GM12878 (cell line): ENCODE measurements at regions of chr4 and their contacts with region 1.

Region 1: GRCh38 chr4:83284193-83285054 is at the start of gene COQ2:
- DNase-seq: no peak
- ATAC-seq: peak; percentile 80
- H3K4me3 ChIP-seq: peak within 1 kb of the TSS; percentile 69
- H3K27ac ChIP-seq: peak within 1 kb of the TSS; percentile 63
- H3K4me1 ChIP-seq: peaks cover 6% of the 10 kb centered on the region
- H3K27me3 ChIP-seq: no peaks in the 10 kb centered on the region
- CTCF ChIP-seq: peak in 2 of 3 experiments; percentile 10 to 16; a peak in 1 of 6 replicates
- EP300 ChIP-seq: no peak
- POLR2A ChIP-seq: peak; percentile 84
- RAD21 ChIP-seq: no peak
- polyA plus RNA-seq, gene COQ2: 5.0 to 11.2 TPM

Region 2: GRCh38 chr4:82379964-82380733 is 904.3 kb before region 1 on chr4:
- CTCF ChIA-PET with region 1: no interaction called
- POLR2A ChIA-PET with region 1: no interaction called
- RAD21 ChIA-PET with region 1: no interaction called
- SMC1A ChIA-PET with region 1: no interaction called
- in situ Hi-C with region 1: no loop called
- intact Hi-C with region 1: no loop called
- DNase-seq: no peak
- ATAC-seq: no peak
- H3K4me3 ChIP-seq: no peak overlapping the region
- H3K27ac ChIP-seq: no peak overlapping the region
- H3K4me1 ChIP-seq: peaks cover 6% of the 10 kb centered on the region
- H3K27me3 ChIP-seq: no peaks in the 10 kb centered on the region
- CTCF ChIP-seq: no peak
- EP300 ChIP-seq: no peak
- POLR2A ChIP-seq: no peak
- RAD21 ChIP-seq: no peak

Region 3: DNA sequence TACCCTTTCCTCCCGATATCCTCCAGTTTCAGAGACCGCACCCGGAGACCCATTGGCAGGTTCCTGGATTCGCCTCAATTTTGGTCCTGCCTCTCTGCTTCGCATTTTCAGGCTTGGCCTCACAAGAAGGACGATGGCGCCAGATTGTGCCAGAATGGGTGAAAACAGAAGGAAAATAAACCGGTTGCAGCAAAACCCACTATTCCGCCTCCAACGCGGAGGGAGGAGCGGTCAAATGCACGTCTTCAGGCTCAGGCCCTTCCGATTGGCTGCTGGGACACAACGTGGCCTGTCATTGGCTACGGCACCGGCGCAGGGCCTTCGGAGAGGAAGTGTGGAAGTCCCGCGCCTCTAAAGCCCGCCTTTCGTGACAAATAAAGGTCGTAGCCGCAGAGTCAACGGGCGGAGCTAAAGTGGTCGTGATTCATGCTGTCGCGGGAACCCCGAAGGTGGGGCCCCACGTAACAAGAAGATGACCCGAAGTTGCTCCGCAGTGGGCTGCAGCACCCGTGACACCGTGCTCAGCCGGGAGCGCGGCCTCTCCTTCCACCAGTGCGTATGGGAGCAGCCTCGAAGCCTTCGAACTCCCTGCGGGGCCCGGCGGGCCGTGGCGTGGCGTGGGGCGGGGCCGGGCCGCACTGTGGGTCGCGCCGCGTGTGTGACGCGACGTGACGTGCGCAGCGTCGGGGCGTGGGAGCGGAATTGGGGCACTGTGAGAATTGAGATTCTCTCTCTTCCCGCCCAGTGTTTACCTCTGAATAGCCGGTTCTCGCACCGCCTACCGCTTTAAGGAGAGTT is 383.9 kb before region 1 on chr4 and contains the start of gene THAP9:
- CTCF ChIA-PET with region 1: interaction called, 24 read pairs
- POLR2A ChIA-PET with region 1: no interaction called
- RAD21 ChIA-PET with region 1: interaction called, 8 read pairs
- SMC1A ChIA-PET with region 1: interaction called, 17 read pairs
- in situ Hi-C with region 1: no loop called
- intact Hi-C with region 1: loop called (anchors 5 kb)
- DNase-seq: peak; percentile 96
- ATAC-seq: peak; percentile 92
- H3K4me3 ChIP-seq: peak within 1 kb of the TSS; percentile 86
- H3K27ac ChIP-seq: peak within 1 kb of the TSS; percentile 95
- H3K4me1 ChIP-seq: peaks cover 7% of the 10 kb centered on the region
- H3K27me3 ChIP-seq: no peaks in the 10 kb centered on the region
- CTCF ChIP-seq: no peak
- EP300 ChIP-seq: no peak; a peak in 1 of 4 replicates
- POLR2A ChIP-seq: peak; percentile 93
- RAD21 ChIP-seq: no peak
- polyA plus RNA-seq, gene THAP9: 2.4 to 2.5 TPM

Region 4: GRCh38 chr4:83067058-83067639 is 217.3 kb before region 1 on chr4:
- CTCF ChIA-PET with region 1: interaction called, 147 read pairs
- POLR2A ChIA-PET with region 1: interaction called, 3 read pairs
- RAD21 ChIA-PET with region 1: interaction called, 70 read pairs
- SMC1A ChIA-PET with region 1: interaction called, 33 read pairs
- in situ Hi-C with region 1: no loop called
- intact Hi-C with region 1: no loop called
- DNase-seq: no peak
- ATAC-seq: no peak
- H3K4me3 ChIP-seq: no peak overlapping the region
- H3K27ac ChIP-seq: no peak overlapping the region
- H3K4me1 ChIP-seq: no peaks in the 10 kb centered on the region
- H3K27me3 ChIP-seq: no peaks in the 10 kb centered on the region
- CTCF ChIP-seq: no peak
- EP300 ChIP-seq: no peak
- POLR2A ChIP-seq: no peak
- RAD21 ChIP-seq: no peak

Region 5: DNA sequence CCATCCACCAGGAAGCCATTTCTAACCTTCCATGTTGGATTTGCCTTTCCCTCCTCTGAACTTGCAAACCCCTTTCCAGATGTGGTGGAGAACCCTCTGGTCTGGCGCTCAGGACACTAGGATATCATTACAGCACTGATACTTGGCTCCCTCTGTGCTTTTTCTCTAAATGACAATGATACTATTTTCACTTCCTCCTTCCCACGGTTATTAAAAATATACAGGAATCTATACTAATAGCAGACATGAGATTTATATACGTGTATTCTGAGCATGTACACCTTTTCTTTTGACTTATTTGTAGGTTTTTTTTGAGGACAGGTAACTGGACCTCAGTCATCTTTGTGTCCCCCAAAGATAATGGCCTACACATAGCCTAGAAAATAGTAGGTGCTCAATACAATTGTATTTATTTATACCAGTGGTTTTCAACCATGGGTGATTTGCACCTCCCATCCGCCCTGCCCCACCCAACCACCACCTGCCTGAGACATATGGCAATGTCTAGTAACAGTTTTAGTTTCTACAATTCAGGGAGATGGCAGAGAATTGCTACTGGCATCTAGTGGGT is 109.5 kb before region 1 on chr4:
- CTCF ChIA-PET with region 1: interaction called, 6 read pairs
- POLR2A ChIA-PET with region 1: interaction called, 3 read pairs
- RAD21 ChIA-PET with region 1: interaction called, 6 read pairs
- SMC1A ChIA-PET with region 1: interaction called, 4 read pairs
- in situ Hi-C with region 1: no loop called
- intact Hi-C with region 1: loop called (anchors 2 kb)
- DNase-seq: peak; percentile 87
- ATAC-seq: peak; percentile 76
- H3K4me3 ChIP-seq: 0 out of 2 replicates have a peak overlapping the region, but pooled peaks have one; percentile 30
- H3K27ac ChIP-seq: peak overlapping the region; percentile 90
- H3K4me1 ChIP-seq: peaks cover 62% of the 10 kb centered on the region
- H3K27me3 ChIP-seq: no peaks in the 10 kb centered on the region
- CTCF ChIP-seq: no peak
- EP300 ChIP-seq: peak; percentile 1 to 47; a peak in 1 of 4 replicates
- POLR2A ChIP-seq: no peak
- RAD21 ChIP-seq: no peak

Region 6: GRCh38 chr4:83259586-83259985 is 24.8 kb before region 1 on chr4:
- CTCF ChIA-PET with region 1: interaction called, 80 read pairs
- POLR2A ChIA-PET with region 1: interaction called, 8 read pairs
- RAD21 ChIA-PET with region 1: interaction called, 54 read pairs
- SMC1A ChIA-PET with region 1: interaction called, 85 read pairs
- in situ Hi-C with region 1: no loop called
- intact Hi-C with region 1: loop called (anchors 2 kb)
- DNase-seq: no peak
- ATAC-seq: peak; percentile 69
- H3K4me3 ChIP-seq: no peak overlapping the region
- H3K27ac ChIP-seq: peak overlapping the region; percentile 28
- H3K4me1 ChIP-seq: peaks cover 32% of the 10 kb centered on the region
- H3K27me3 ChIP-seq: no peaks in the 10 kb centered on the region
- CTCF ChIP-seq: no peak
- EP300 ChIP-seq: no peak
- POLR2A ChIP-seq: no peak
- RAD21 ChIP-seq: no peak

Region 7: DNA sequence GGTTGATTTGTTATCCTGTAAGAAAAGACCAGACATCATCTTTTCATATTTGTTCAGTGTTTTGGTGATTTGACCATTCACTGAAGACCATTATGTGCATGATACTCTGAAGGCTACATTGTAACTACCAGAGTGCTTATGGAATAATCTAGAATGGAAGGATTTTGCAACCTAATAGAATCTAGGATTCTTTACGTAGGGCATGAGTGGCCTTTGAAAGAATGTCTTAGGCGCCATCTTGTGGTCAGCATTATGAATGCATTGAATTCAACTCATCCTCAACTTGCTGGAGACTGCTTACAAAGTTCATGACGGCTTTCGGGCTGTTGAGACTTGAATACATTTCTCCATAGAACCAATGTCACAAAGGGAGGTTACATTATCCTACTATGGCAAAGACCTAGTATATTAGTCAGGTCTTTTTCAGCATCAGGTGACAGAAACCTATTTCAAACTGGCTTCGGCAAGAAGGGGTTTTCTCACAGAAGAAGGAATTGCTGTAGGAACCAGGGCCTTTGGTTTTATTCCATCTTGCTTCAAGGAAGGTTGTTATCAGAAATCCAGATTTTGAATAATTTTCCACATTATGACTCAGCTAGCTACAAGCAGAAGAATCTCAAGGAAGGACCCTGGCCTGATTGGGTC is 355.5 kb after region 1 on chr4:
- CTCF ChIA-PET with region 1: interaction called, 5 read pairs
- POLR2A ChIA-PET with region 1: no interaction called
- RAD21 ChIA-PET with region 1: no interaction called
- SMC1A ChIA-PET with region 1: interaction called, 3 read pairs
- in situ Hi-C with region 1: no loop called
- intact Hi-C with region 1: loop called (anchors 10 kb)
- DNase-seq: peak; percentile 42
- ATAC-seq: peak; percentile 89
- H3K4me3 ChIP-seq: no peak overlapping the region
- H3K27ac ChIP-seq: no peak overlapping the region
- H3K4me1 ChIP-seq: no peaks in the 10 kb centered on the region
- H3K27me3 ChIP-seq: peaks cover 0 to 1% of the 10 kb centered on the region in 2 experiments; a peak in 1 of 4 replicates
- CTCF ChIP-seq: peak; percentile 67 to 90 (median 80)
- EP300 ChIP-seq: no peak
- POLR2A ChIP-seq: no peak
- RAD21 ChIP-seq: peak; percentile 89